Posterior cingulate gyrus (tissue), 11 donors: ENCODE measurements at regions of chr9 and their contacts with region 1.

Region 1: DNA sequence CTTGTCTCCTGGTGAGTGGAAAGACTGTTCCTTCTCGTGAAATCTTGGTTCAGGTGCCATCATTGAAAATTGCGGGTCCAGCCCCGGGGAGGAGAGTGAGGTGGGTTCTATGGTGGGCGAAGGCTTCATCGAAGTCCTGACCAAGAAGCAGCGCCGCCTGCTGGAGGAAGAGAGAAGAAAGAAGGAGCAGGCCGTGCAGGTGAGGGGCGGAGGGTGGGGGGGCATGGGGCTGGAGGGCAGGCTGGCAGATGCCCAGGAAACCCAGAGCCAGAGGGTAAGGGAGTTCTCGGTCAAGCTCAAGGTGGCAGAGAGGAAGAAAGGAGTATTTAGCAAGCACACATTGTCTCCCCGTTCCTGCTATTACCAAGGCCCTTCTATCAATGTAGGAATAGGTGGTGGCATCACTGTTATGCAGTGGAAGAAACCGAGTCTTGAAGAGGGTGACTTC is 24.3 kb upstream of the POMT1 start:
- DNase-seq: peak in 3 of 10 donors; percentile 45 to 85 (median 49)

Region 2: GRCh38 chr9:131253891-131254491 is 224.5 kb before region 1 on chr9:
- intact Hi-C with region 1: no loop called
- DNase-seq: peak in 4 of 10 donors; percentile 45 to 92 (median 66)

Region 3: GRCh38 chr9:131349881-131350563 is 128.4 kb before region 1 on chr9:
- intact Hi-C with region 1: loop called (anchors 5 kb)
- DNase-seq: peak; percentile 79 to 98 (median 91)

Region 4: DNA sequence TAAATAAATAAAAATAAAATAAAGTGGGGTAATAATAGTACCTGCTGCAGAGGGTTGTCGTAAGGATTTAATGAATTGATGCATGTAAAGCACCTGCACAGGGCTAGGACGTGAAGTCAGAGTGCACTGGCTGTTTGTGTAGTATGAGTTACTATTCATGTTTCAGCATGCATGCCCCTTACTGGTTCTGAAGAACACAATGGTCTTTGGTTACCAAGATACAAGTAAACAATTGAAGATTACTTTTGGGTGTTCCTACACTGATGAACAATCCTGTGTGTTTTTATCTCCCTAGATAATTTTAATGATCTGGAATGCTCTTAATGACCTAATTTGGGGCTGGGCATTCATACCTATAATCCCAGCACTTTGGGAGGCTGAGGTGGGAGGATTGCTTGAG is 107.8 kb before region 1 on chr9:
- intact Hi-C with region 1: loop called (anchors 10 kb)
- DNase-seq: no peak

Region 5: DNA sequence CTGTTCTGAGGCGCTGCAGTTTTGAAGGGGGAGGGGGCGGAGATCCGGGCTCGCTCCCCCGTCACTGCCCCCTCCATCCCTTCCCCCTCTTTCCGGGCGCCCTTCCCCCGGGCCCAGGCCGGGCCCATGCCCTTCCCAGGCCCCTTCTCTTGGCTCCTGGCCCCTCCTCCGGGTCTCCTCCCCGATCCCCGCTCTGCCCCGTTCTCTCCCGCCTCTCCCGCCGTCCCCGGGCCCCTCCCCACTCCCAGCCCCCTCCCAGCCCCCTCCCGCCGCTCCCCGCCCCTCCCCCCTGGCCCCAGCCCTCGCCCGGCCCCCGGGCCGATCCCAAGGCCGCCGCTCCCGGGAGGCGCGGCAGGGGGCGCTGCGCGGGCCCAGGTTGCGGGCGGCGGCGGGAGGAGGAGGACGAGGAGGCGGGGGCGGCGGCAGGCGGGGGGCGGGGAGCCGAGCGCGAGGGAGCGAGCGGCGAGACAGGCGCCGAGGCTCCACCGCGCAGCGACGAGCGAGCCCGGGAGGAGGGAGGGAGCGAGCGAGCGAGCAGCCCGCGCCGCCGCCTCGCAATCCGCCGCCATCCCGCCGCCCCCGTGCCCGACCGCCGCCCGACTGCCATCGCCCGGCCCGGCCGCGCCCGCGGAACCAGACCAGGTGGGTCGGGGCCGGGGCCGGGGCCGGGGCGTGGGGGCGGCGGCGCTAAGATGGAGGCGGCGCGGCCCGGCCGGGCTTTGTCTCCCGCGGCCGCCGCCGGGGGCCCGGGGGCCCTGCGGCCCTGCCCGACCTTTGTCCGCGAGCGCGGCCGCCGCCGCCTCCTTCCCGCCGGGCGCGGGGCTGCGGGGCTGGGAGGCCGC is 84.6 kb before region 1 on chr9 and contains the start of gene PRRC2B:
- intact Hi-C with region 1: no loop called
- DNase-seq: peak; percentile 68 to 96 (median 76)